ENCODE measurements at regions of chr20 and their contacts with region 1.

Region 1: DNA sequence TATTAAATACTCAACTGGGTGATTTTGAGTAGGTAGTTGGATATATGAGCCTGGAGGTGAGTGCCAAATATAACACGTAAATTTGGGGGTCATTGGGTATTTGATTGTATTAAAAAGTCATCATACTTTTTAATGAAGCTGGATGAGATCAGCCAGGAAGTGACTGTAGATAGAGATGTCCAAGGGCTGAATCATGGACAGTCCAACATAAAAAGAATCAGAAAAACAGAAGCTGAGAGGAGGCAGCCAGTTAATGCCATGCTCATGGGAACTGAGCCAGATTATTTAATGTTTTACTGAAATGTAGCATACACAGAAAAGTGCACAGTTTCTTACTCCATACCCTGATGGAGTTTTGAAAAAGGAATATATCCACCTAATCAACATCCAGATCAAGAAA is 435.5 kb upstream of the PLCB4 start:
- DNase-seq: no peak
- ATAC-seq: no peak
- H3K4me3 ChIP-seq: no peak overlapping the region
- H3K27ac ChIP-seq: no peak overlapping the region
- H3K4me1 ChIP-seq: peaks cover 0 to 8% (median 0%) of the 10 kb centered on the region in 12 donors
- H3K27me3 ChIP-seq: no peaks in the 10 kb centered on the region
- CTCF ChIP-seq: no peak
- POLR2A ChIP-seq: no peak

Region 2: GRCh38 chr20:8571611-8572010 is 61.8 kb before region 1 on chr20:
- intact Hi-C with region 1: loop called in 1 of 10 experiments (anchors 10 kb)
- DNase-seq: no peak
- ATAC-seq: no peak
- H3K4me3 ChIP-seq: no peak overlapping the region
- H3K27ac ChIP-seq: no peak overlapping the region
- H3K4me1 ChIP-seq: peaks cover 0 to 15% (median 0%) of the 10 kb centered on the region in 12 donors
- H3K27me3 ChIP-seq: no peaks in the 10 kb centered on the region
- CTCF ChIP-seq: no peak
- POLR2A ChIP-seq: no peak

Region 3: GRCh38 chr20:8946036-8946940 is 312.9 kb after region 1 on chr20:
- intact Hi-C with region 1: no loop called
- DNase-seq: no peak
- ATAC-seq: peak; percentile 59 to 86 (median 74)
- H3K4me3 ChIP-seq: no peak overlapping the region
- H3K27ac ChIP-seq: peak overlapping the region in 10 of 12 donors; percentile 21 to 59 (median 44)
- H3K4me1 ChIP-seq: peaks cover 0 to 35% (median 22%) of the 10 kb centered on the region in 12 donors
- H3K27me3 ChIP-seq: no peaks in the 10 kb centered on the region
- CTCF ChIP-seq: no peak
- POLR2A ChIP-seq: no peak

Region 4: DNA sequence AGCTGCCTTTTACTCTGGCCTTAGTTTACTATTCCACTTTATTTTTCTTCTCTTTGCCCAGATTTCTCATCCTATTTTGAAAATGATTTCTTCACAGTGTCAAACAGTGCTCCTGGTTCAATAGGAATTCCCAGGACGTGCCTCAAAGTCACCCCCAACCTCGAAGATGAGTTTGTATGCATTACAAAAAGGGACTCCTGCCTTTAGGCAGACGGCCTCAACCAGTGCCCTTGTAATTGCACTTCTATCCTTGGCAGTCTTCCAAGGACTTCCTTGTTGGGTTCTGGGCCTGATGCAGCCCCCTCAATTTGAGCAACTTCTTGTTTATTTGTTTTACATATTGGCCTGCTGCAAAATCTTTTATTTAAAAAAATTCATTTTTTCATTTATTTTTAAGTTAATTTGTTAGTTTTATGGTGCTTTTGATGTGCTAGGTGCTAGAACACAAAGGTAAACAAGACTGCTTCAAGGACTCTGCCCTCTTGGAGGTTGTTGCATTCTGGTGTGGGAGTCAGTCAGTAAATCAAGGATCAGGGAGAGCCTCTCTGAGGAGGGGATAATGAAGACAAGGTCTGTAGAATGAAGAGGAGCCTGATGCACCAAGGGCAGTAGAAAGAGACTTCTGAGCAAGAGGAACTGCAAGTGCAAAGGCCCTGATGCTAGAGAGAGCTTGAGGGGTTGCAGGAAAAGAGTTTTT is 699.6 kb after region 1 on chr20:
- intact Hi-C with region 1: no loop called
- DNase-seq: no peak
- ATAC-seq: no peak
- H3K4me3 ChIP-seq: no peak overlapping the region
- H3K27ac ChIP-seq: no peak overlapping the region
- H3K4me1 ChIP-seq: peaks cover 0 to 24% (median 17%) of the 10 kb centered on the region in 12 donors
- H3K27me3 ChIP-seq: no peaks in the 10 kb centered on the region
- CTCF ChIP-seq: no peak
- POLR2A ChIP-seq: no peak

Measured in heart left ventricle (tissue), 16 donors.